Ovary (tissue), 10 donors: ENCODE measurements at regions of chr6 and their contacts with region 1.

Region 1: DNA sequence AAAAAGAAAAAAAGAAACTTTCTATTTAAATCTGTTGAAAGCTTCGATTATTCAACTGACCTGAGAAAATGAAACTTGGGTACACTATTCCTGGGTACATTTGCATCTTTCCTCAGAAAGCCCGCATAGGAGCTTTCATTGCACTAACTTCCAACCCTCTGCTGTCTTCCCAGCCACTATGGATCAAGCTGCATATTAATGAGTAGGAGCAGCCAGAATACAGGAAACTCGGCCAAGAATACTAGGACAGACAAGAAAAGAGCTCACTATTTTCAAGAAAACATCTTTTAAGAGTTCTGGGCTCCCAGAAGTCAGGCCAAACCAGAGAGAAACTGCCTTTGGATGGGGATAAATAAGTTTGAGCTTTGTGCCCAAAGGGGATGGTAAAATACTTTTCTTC is 135.0 kb upstream of the CCDC28A start:
- DNase-seq: no peak
- H3K4me3 ChIP-seq: no peak overlapping the region
- H3K27ac ChIP-seq: no peak overlapping the region
- H3K4me1 ChIP-seq: no peaks in the 10 kb centered on the region
- H3K27me3 ChIP-seq: no peaks in the 10 kb centered on the region
- CTCF ChIP-seq: no peak
- EP300 ChIP-seq: no peak
- POLR2A ChIP-seq: no peak

Region 2: DNA sequence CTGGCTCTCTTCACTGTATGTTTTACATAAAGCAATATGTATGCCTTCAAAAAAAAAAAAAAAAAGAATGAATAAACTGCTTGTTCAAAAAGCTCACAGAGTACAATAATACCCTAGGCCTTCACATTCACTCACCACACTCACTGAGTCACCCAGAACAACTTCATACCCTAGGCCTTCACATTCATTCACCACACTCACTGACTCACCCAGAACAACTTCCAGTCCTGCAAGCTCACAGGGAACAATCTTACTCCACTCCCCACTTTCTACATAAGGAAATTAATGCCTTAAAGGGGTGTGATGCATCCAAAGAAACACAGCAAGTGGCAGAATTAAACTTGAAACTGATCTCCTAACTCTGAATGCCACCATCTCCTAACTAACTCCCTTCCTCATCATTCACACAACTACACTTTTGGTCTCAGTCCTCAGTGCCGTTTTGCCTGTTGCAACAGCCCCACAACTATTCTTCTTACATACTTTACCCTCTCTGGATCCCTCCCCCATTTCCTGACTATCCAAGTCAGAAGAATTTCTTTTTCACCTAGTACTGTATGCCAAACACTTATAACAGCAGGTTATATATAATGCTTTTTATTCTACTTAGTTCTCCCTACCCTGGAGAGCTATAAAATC is 173.5 kb before region 1 on chr6:
- intact Hi-C with region 1: no loop called
- DNase-seq: no peak
- H3K4me3 ChIP-seq: no peak overlapping the region
- H3K27ac ChIP-seq: no peak overlapping the region
- H3K4me1 ChIP-seq: no peaks in the 10 kb centered on the region
- H3K27me3 ChIP-seq: no peaks in the 10 kb centered on the region
- CTCF ChIP-seq: no peak
- EP300 ChIP-seq: no peak
- POLR2A ChIP-seq: no peak

Region 3: GRCh38 chr6:138605958-138606357 is 32.6 kb before region 1 on chr6:
- intact Hi-C with region 1: loop called in 1 of 4 experiments (anchors 1 kb)
- DNase-seq: no peak
- H3K4me3 ChIP-seq: no peak overlapping the region
- H3K27ac ChIP-seq: no peak overlapping the region
- H3K4me1 ChIP-seq: no peaks in the 10 kb centered on the region
- H3K27me3 ChIP-seq: no peaks in the 10 kb centered on the region
- CTCF ChIP-seq: no peak
- EP300 ChIP-seq: no peak
- POLR2A ChIP-seq: no peak

Region 4: DNA sequence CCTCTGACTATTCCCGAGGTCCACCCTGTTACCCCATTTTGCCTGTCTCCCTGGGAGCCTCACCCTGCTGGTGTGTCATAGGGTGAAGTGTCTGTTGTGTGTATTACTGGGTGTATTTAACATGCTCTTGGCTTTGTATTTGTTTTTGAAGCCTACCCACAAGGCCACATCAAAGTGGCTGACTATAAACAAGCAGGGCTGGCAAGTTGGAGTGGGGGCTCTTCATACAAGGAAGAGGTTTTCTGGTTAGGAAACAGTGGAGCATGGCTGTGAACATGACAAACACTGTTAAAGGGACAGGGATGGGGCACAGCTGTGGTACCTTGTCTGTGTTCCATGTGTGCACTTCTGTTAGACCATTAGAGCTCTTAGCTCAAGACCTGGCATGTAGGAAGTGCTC is 522.6 kb after region 1 on chr6:
- intact Hi-C with region 1: no loop called
- DNase-seq: no peak
- H3K4me3 ChIP-seq: no peak overlapping the region
- H3K27ac ChIP-seq: no peak overlapping the region
- H3K4me1 ChIP-seq: peaks cover 1% of the 10 kb centered on the region
- H3K27me3 ChIP-seq: no peaks in the 10 kb centered on the region
- CTCF ChIP-seq: no peak
- EP300 ChIP-seq: no peak
- POLR2A ChIP-seq: no peak